HCT116 (cell line): ENCODE measurements at regions of chr13 and their contacts with region 1.

Region 1: GRCh38 chr13:20495082-20496023 is 30.3 kb downstream of the CRYL1 start:
- DNase-seq: peak; percentile 50
- ATAC-seq: peak; percentile 79
- H3K4me3 ChIP-seq: no peak overlapping the region
- H3K27ac ChIP-seq: 0 out of 2 replicates have a peak overlapping the region, but pooled peaks have one; percentile 7
- H3K4me1 ChIP-seq: peaks cover 0 to 5% of the 10 kb centered on the region in 2 experiments; a peak in 1 of 4 replicates
- H3K27me3 ChIP-seq: no peaks in the 10 kb centered on the region
- CTCF ChIP-seq: peak; percentile 71 to 98 (median 93); a peak in 5 of 6 replicates
- POLR2A ChIP-seq: no peak
- RAD21 ChIP-seq: peak; percentile 85

Region 2: DNA sequence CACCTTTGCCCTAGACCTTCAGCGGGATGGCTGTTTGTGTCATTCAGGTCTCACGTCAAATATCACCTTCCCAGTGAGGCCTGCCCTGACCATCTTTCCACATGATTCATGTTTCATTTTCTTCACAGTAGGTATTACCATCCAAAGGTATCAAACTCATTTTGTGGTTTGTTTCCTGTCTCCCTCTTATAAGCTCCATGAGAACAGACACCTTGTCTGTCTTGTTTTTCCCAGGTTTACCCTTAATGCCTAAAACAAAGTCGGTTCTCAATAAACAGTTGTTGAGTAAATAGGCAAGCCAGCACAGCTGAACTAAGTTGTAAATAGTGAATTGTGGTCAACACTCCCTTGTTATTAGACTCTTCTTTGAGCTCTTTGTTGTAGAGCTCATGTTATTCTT is 140.6 kb before region 1 on chr13:
- CTCF ChIA-PET with region 1: no interaction called
- POLR2A ChIA-PET with region 1: no interaction called
- RAD21 ChIA-PET with region 1: no interaction called
- intact Hi-C with region 1: no loop called
- DNase-seq: no peak
- ATAC-seq: no peak
- H3K4me3 ChIP-seq: no peak overlapping the region
- H3K27ac ChIP-seq: no peak overlapping the region
- H3K4me1 ChIP-seq: peaks cover 0 to 7% of the 10 kb centered on the region in 2 experiments; a peak in 1 of 4 replicates
- H3K27me3 ChIP-seq: no peaks in the 10 kb centered on the region
- CTCF ChIP-seq: no peak
- POLR2A ChIP-seq: no peak
- RAD21 ChIP-seq: no peak

Region 3: GRCh38 chr13:20512042-20512683 is 16.8 kb after region 1 on chr13:
- CTCF ChIA-PET with region 1: no interaction called
- POLR2A ChIA-PET with region 1: no interaction called
- RAD21 ChIA-PET with region 1: no interaction called
- intact Hi-C with region 1: no loop called
- DNase-seq: no peak
- ATAC-seq: no peak
- H3K4me3 ChIP-seq: no peak overlapping the region
- H3K27ac ChIP-seq: no peak overlapping the region
- H3K4me1 ChIP-seq: no peaks in the 10 kb centered on the region
- H3K27me3 ChIP-seq: no peaks in the 10 kb centered on the region
- CTCF ChIP-seq: no peak
- POLR2A ChIP-seq: no peak
- RAD21 ChIP-seq: no peak

Region 4: GRCh38 chr13:20713751-20714150 is 218.4 kb after region 1 on chr13:
- CTCF ChIA-PET with region 1: interaction called, 3 read pairs
- POLR2A ChIA-PET with region 1: no interaction called
- RAD21 ChIA-PET with region 1: no interaction called
- intact Hi-C with region 1: loop called (anchors 5 kb)
- DNase-seq: no peak
- ATAC-seq: no peak
- H3K4me3 ChIP-seq: no peak overlapping the region
- H3K27ac ChIP-seq: no peak overlapping the region
- H3K4me1 ChIP-seq: peaks cover 0 to 23% of the 10 kb centered on the region in 2 experiments; a peak in 3 of 4 replicates
- H3K27me3 ChIP-seq: no peaks in the 10 kb centered on the region
- CTCF ChIP-seq: no peak
- POLR2A ChIP-seq: no peak
- RAD21 ChIP-seq: no peak

Region 5: GRCh38 chr13:20773194-20774080 is 278.1 kb after region 1 on chr13 and contains the start of gene EEF1AKMT1:
- CTCF ChIA-PET with region 1: no interaction called
- POLR2A ChIA-PET with region 1: no interaction called
- RAD21 ChIA-PET with region 1: no interaction called
- intact Hi-C with region 1: no loop called
- DNase-seq: peak; percentile 83
- ATAC-seq: peak; percentile 89
- H3K4me3 ChIP-seq: peak within 1 kb of the TSS; percentile 74 to 80
- H3K27ac ChIP-seq: peak within 1 kb of the TSS; percentile 98
- H3K4me1 ChIP-seq: peaks cover 8 to 15% of the 10 kb centered on the region in 2 experiments; a peak in 3 of 4 replicates
- H3K27me3 ChIP-seq: no peaks in the 10 kb centered on the region
- CTCF ChIP-seq: no peak
- POLR2A ChIP-seq: peak; percentile 78
- RAD21 ChIP-seq: no peak
- total RNA-seq, gene EEF1AKMT1: 9.8 TPM

Region 6: DNA sequence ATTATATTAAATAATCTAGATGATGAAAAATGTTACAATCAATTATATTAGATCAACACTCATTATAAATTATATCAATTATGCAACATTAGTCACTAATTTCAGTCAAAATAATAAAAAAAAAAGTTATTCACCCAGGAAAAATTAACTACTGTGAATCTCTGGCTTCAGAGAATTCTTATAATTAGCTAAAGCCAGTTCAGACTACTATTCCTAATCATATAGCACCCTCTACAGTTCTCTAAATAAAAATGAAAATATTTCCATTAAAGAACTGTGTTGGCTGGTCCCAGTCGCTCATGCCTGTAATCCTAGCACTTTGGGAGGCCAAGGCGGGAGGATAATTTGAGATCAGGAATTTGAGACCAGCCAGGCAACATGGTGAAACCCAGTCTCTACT is 374.2 kb after region 1 on chr13:
- CTCF ChIA-PET with region 1: interaction called, 5 read pairs
- POLR2A ChIA-PET with region 1: no interaction called
- RAD21 ChIA-PET with region 1: no interaction called
- intact Hi-C with region 1: loop called (anchors 1 kb)
- DNase-seq: no peak
- ATAC-seq: no peak
- H3K4me3 ChIP-seq: no peak overlapping the region
- H3K27ac ChIP-seq: no peak overlapping the region
- H3K4me1 ChIP-seq: no peaks in the 10 kb centered on the region
- H3K27me3 ChIP-seq: no peaks in the 10 kb centered on the region
- CTCF ChIP-seq: peak in 1 of 3 experiments; percentile 5; a peak in 1 of 6 replicates
- POLR2A ChIP-seq: no peak
- RAD21 ChIP-seq: peak; percentile 42; the same call in 1 of the 2 replicates